GM13977 (cell line): ENCODE measurements at regions of chr9 and their contacts with region 1.

Region 1: DNA sequence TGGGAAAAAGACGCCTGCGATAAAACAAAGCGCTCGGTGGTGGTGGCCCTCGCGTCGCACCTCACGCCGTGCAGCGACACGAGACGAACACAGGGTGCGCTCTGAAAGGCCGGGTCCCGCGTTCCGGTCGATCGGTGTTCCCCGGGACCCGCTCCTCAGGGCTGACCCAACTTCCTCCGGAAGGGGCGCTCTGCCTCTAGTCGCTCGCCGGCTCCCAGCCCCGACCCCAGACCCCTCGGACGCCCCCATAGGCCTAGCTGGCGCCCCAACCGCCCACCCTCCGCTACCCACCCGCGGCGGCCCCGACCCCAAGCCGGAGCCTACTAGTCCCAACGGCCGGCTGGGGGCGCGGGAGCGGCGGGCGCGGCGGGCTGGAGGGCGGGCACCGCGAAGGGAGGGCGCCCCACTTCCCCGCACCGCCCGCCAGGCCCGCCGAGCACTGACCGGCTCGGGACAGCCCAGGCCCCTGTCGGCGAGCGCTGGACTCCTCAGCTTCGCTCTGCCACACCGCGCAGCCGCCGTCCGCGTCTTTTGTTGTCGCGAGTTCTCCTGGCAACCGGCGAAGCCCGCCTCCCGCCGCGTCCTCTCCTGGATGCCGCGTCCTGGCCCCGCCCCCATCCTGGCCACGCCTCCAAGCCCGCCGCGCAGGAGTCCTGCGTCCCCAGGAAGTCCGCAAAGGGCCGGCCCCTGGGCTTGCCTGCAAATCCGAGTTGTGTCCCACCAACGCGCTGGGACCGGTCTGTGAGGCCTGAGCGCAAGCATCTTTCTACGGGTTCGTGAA is at the start of gene KIF27:
- DNase-seq: peak; percentile 95
- CTCF ChIP-seq: peak; percentile 39

Region 2: DNA sequence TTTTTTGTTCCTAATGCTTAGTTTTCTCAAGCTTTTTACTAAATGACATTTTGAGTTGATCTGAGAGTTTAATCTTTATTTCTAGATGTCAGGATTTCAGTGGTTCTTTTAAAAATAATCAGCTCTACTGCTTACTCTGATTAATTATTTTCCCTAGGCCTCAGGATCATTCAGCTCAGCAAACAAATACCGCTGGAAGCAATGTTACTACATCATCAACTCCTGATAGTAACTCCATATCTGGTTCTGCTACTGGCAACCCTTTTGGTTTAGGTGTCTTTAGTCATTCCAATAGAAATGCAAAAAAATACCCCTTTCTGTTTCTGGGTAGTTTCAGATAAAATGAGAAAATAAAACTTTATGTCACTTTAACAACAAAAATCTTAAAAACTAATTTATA is 303.8 kb before region 1 on chr9:
- in situ Hi-C with region 1: loop called (anchors 10 kb)
- DNase-seq: no peak
- CTCF ChIP-seq: no peak